ENCODE measurements at regions of chr11 and their contacts with region 1.

Region 1: DNA sequence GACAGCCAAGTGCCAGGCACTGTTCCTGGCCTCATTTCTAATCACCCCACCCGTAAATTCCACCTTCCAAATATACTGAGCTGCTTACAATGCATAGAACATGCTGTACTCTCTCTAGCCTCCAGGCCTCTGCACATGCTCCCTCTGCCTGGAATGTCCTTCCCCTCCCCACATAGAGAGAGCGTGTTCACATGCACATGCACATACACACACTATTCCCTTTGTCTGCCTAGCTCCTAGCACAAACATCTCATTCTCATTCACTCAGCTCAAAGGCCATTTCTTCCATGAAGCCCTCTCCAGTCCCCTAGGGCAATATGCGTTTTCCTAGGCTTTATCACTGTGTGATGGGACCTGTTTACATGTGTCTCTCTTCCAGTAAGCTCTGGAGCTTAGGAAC is 144.6 kb downstream of the WT1 start:
- DNase-seq: no peak
- H3K4me3 ChIP-seq: no peak overlapping the region
- H3K27ac ChIP-seq: no peak overlapping the region
- H3K4me1 ChIP-seq: peaks cover 0 to 2% (median 0%) of the 10 kb centered on the region in 4 experiments; a peak in 1 of 7 replicates
- H3K27me3 ChIP-seq: no peaks in the 10 kb centered on the region
- CTCF ChIP-seq: no peak
- EP300 ChIP-seq: no peak
- POLR2A ChIP-seq: no peak
- RAD21 ChIP-seq: no peak

Region 2: GRCh38 chr11:32279672-32280071 is 11.1 kb before region 1 on chr11:
- CTCF ChIA-PET with region 1: interaction called, 59 read pairs
- POLR2A ChIA-PET with region 1: no interaction called
- DNase-seq: no peak
- H3K4me3 ChIP-seq: no peak overlapping the region
- H3K27ac ChIP-seq: no peak overlapping the region
- H3K4me1 ChIP-seq: no peaks in the 10 kb centered on the region
- H3K27me3 ChIP-seq: no peaks in the 10 kb centered on the region
- CTCF ChIP-seq: peak in 2 of 3 experiments; percentile 17 to 47; a peak in 2 of 4 replicates
- EP300 ChIP-seq: no peak
- POLR2A ChIP-seq: no peak
- RAD21 ChIP-seq: 0 out of 4 replicates have a peak, but pooled peaks of 1 of the 2 experiments have one; percentile 7

Region 3: DNA sequence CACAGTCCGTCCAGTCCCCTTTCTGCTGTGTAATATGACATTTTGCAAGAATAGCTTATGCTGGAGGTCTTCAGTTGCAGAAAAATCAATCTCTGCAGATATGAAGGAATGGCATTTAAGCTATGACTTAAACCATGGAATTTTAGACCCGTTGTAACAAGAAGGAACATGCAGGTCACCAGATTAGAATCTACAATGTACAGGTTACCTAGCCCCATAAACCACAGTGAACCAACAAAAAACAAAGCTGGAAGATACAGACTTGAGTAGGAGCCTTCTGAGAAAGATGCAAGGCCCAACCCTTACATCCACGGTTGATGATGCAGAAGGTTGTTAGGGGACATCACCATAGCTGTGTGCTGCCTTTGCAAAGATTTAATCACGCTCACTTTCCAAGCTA is 12.0 kb after region 1 on chr11:
- CTCF ChIA-PET with region 1: interaction called, 18 read pairs
- POLR2A ChIA-PET with region 1: no interaction called
- DNase-seq: no peak
- H3K4me3 ChIP-seq: no peak overlapping the region
- H3K27ac ChIP-seq: no peak overlapping the region
- H3K4me1 ChIP-seq: no peaks in the 10 kb centered on the region
- H3K27me3 ChIP-seq: no peaks in the 10 kb centered on the region
- CTCF ChIP-seq: no peak
- EP300 ChIP-seq: no peak
- POLR2A ChIP-seq: no peak
- RAD21 ChIP-seq: no peak

Measured in H1 (cell line).